GM18951 (cell line): ENCODE measurements at regions of chr6 and their contacts with region 1.

Region 1: GRCh38 chr6:35402136-35402855 is 49.8 kb upstream of the FANCE start:
- POLR2A ChIP-seq: no peak

Region 2: GRCh38 chr6:34887753-34888513 is 514.4 kb before region 1 on chr6 and contains the start of gene TAF11:
- in situ Hi-C with region 1: no loop called
- POLR2A ChIP-seq: peak; percentile 88

Region 3: DNA sequence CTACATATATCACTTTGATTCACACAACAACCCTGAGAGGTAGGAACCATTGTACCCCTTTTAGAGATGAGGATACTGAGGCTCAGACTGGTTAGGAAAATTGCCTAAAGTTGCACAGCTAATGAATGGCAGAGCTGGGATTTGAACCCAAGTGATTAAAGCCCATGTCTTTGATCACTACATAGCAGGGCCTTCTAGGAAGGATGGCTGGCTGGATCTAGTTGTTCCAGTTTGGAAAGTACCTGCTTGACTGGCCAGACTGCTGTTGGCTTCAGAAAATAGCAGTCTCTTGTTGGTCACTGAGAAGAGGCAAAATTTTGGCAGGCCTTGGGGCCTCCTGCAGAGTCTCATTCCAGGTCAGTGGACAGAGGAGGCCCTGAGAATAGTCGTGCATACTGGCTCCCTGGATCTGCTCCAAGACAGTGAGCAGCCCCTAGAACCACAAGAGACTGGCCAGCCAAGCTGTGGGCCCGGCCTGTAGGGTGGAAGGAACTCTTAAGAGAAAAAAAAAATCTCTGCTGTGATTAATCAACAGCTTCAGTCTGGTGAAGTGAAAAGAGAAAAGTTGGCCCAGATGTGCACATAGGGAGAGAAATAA is 42.4 kb before region 1 on chr6:
- in situ Hi-C with region 1: loop called (anchors 10 kb)
- POLR2A ChIP-seq: no peak